Activated CD4-positive, alpha-beta memory T cell treated with anti-CD3 and anti-CD28 coated beads, Interleukin-2, amount 10 ng/mL, durations not matched to agents 7 days and 5 days (primary cell): ENCODE measurements at regions of chr2 and their contacts with region 1.

Region 1: GRCh38 chr2:96254571-96254970 is 11.2 kb downstream of the TMEM127 start:
- DNase-seq: no peak
- H3K4me3 Mint-ChIP-seq: no peak overlapping the region
- H3K27ac Mint-ChIP-seq: no peak overlapping the region
- H3K4me1 Mint-ChIP-seq: peaks cover 53% of the 10 kb centered on the region
- H3K27me3 Mint-ChIP-seq: no peaks in the 10 kb centered on the region

Region 2: GRCh38 chr2:96131152-96131812 is 123.3 kb before region 1 on chr2:
- CTCF ChIA-PET with region 1: no interaction called
- POLR2A ChIA-PET with region 1: no interaction called
- DNase-seq: peak; percentile 32
- H3K4me3 Mint-ChIP-seq: no peak overlapping the region
- H3K27ac Mint-ChIP-seq: peak overlapping the region; percentile 33
- H3K4me1 Mint-ChIP-seq: peaks cover 26% of the 10 kb centered on the region
- H3K27me3 Mint-ChIP-seq: no peaks in the 10 kb centered on the region

Region 3: GRCh38 chr2:96241900-96242611 is 12.5 kb before region 1 on chr2:
- CTCF ChIA-PET with region 1: no interaction called
- POLR2A ChIA-PET with region 1: interaction called, 13 read pairs
- DNase-seq: peak; percentile 77
- H3K4me3 Mint-ChIP-seq: peak overlapping the region; percentile 31
- H3K27ac Mint-ChIP-seq: peak overlapping the region; percentile 91
- H3K4me1 Mint-ChIP-seq: peaks cover 54% of the 10 kb centered on the region
- H3K27me3 Mint-ChIP-seq: no peaks in the 10 kb centered on the region

Region 4: GRCh38 chr2:96291751-96292150 is 37.2 kb after region 1 on chr2:
- CTCF ChIA-PET with region 1: no interaction called
- POLR2A ChIA-PET with region 1: no interaction called
- DNase-seq: no peak
- H3K4me3 Mint-ChIP-seq: no peak overlapping the region
- H3K27ac Mint-ChIP-seq: no peak overlapping the region
- H3K4me1 Mint-ChIP-seq: no peaks in the 10 kb centered on the region
- H3K27me3 Mint-ChIP-seq: no peaks in the 10 kb centered on the region